Head of caudate nucleus (tissue), 42 donors: ENCODE measurements at regions of chr11 and their contacts with region 1.

Region 1: DNA sequence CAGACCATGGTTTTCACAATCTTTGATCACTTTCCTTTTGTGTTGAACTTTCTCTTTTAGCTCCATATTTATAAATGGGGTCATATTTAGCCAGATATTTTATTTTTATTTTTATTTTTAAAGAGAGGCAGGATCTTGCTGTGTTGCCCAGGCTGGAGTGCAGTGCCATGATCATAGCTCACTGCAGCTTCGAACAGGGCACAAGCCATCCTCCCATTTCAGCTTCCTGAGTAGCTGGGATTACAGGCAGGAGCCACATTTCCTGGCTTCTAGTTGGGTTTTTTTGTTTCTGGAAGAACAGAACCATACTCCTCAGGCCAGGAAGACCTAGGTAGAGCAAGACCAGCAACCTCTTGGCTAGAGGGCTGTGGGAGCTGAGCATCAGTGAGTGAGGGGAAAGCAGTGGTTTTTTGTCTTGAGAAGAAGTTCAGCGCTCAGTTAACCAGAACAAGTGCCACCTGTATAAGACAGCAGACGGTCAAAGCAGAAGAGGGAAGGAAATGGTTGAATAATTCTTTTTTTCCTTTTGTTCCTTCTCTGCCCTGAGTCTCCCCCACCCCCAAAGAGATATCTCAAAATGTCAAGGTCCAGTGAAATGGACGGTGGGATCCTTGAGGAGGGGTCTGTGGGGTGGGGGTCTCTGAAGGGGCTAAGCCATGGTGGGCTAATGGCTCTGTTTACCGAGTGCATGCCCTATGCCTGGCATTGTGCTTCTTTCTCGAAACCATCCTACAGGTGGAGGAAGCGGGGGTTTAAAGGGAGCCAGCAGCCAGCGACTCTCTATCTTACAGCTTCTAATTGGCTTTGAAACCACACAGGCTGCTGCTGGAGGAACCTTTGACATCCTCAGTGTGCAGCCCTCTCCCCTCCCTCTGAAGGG is 63.0 kb downstream of the PTPRJ start:
- DNase-seq: no peak

Region 2: DNA sequence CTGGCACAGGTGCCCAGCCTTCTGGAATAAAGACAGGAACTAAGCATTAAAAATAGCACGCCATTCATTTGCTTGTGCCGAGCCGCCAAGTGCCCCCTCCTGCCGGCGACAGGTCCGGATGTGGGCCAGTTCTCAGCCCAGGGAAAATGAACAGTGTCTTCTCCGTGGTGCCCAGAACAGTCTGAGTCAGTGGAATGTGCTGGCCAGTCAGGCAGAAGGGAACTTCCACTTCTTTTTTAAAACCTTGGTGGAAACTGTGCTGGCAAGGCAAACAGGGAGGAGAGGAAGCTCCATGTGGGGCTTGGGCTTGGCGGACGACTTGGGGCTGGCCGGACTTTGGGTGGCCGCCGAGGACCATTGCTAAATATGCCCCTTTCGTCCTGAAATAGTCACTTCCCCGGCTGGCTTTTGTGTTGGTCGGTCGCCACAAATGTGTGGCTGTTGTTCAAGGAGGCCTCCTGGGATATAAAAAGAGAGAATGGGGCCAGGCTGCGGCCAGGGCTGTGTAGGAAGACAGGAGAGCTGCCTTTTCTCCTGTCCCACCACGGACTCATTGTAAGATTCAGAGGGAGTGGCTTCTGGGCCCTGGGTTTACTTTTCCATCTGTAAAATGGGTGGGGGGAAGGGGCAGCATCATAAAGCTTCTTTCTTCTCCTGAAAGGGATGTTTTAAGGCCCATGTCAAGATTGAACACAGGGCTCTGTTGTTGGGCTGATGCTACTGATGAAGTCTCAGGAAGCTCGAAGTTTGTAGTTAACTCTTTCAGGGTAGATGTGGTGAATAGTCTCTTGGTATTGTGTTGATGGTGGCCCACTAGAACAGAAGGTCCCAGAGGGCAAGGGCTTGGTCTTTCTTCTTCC is 38.0 kb after region 1 on chr11:
- intact Hi-C with region 1: loop called (anchors 5 kb)
- DNase-seq: peak in 41 of 42 donors; percentile 37 to 88 (median 62)